ENCODE measurements at regions of chr1 and their contacts with region 1.

Region 1: DNA sequence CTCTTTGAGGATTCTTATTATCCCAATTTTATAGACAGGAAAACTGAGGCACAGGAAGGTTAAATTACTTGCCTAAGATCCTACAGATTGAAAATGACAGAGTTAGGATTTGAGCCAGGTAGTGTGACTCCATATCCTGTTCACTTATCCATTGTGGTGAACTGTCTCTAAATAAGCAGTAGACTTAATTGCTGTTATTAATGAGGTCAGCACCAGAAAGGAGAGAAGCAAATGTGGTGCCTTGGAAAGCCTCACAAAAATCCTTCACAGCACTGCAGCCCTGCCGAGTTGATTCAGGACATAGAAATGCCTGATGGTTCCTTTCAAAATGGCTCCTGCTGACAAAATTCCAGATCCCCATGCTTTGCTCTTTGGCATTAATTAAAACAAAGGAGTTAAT is 193.3 kb upstream of the BEND5 start:
- DNase-seq: no peak
- H3K4me3 ChIP-seq: no peak overlapping the region
- H3K27ac ChIP-seq: no peak overlapping the region
- H3K4me1 ChIP-seq: no peaks in the 10 kb centered on the region
- H3K27me3 ChIP-seq: no peaks in the 10 kb centered on the region
- CTCF ChIP-seq: no peak
- POLR2A ChIP-seq: no peak

Region 2: DNA sequence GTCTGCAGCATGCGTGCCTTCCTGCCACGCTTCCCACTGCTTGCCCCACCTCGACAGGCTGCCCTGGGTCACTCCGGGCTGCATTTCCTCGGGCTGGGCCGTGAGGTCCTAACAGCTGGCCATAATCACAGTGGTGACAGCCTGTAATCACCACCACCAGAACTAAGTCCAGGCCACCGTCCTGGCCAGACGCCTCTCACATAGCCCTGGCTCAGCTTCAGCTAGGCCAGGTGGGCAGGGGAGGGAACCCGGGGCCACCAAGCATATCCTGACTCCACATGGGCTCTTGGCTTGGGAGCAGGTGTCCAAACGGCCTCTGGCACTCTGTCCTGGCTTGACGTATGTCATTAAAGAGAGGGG is 1202.2 kb before region 1 on chr1:
- intact Hi-C with region 1: loop called (anchors 5 kb)
- DNase-seq: no peak
- H3K4me3 ChIP-seq: no peak overlapping the region
- H3K27ac ChIP-seq: peak overlapping the region in 1 of 2 donors; percentile 14
- H3K4me1 ChIP-seq: no peaks in the 10 kb centered on the region
- H3K27me3 ChIP-seq: no peaks in the 10 kb centered on the region
- CTCF ChIP-seq: no peak
- POLR2A ChIP-seq: no peak